ENCODE measurements at regions of chr11 and their contacts with region 1.

Region 1: DNA sequence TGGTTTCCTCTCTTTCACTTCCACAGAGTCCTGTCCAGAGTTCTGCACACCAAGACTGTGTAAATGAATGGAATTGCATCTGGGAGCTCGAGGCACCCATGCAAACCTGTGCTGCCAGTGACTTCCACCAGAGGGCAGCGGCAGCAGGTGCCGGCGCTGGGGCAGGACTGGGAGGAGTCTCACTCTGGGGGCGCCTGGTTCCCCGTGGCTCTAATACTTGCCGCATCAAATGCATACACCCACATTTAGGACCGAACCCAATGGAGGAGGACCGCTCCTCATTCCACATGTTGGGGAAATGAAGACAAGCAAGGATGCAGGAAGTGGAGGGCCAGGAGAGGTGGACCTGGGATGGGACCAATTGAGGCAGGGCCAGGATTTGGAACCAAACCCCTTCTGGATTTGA is 1.1 kb upstream of the CD6 start:
- DNase-seq: peak; percentile 66 to 88 (median 83)
- ATAC-seq: peak; percentile 74
- H3K4me3 ChIP-seq: peak overlapping the region in 1 of 2 experiments; percentile 80
- H3K4me3 Mint-ChIP-seq: peak overlapping the region; percentile 96
- H3K27ac ChIP-seq: peak overlapping the region; percentile 85 to 90
- H3K27ac Mint-ChIP-seq: peak overlapping the region; percentile 97
- H3K4me1 ChIP-seq: peaks cover 16% of the 10 kb centered on the region
- H3K4me1 Mint-ChIP-seq: peaks cover 30% of the 10 kb centered on the region
- H3K27me3 ChIP-seq: no peaks in the 10 kb centered on the region
- H3K27me3 Mint-ChIP-seq: no peaks in the 10 kb centered on the region
- CTCF ChIP-seq: peak; percentile 92

Region 2: GRCh38 chr11:60840470-60841430 is 129.6 kb before region 1 on chr11:
- CTCF ChIA-PET with region 1: no interaction called
- POLR2A ChIA-PET with region 1: no interaction called
- intact Hi-C with region 1: no loop called
- DNase-seq: no peak
- ATAC-seq: no peak
- H3K4me3 ChIP-seq: peak overlapping the region in 1 of 2 experiments; percentile 84
- H3K4me3 Mint-ChIP-seq: peak overlapping the region; percentile 93
- H3K27ac ChIP-seq: peak overlapping the region; percentile 70 to 83
- H3K27ac Mint-ChIP-seq: peak overlapping the region; percentile 97
- H3K4me1 ChIP-seq: peaks cover 35% of the 10 kb centered on the region
- H3K4me1 Mint-ChIP-seq: peaks cover 44% of the 10 kb centered on the region
- H3K27me3 ChIP-seq: no peaks in the 10 kb centered on the region
- H3K27me3 Mint-ChIP-seq: no peaks in the 10 kb centered on the region
- CTCF ChIP-seq: no peak

Region 3: DNA sequence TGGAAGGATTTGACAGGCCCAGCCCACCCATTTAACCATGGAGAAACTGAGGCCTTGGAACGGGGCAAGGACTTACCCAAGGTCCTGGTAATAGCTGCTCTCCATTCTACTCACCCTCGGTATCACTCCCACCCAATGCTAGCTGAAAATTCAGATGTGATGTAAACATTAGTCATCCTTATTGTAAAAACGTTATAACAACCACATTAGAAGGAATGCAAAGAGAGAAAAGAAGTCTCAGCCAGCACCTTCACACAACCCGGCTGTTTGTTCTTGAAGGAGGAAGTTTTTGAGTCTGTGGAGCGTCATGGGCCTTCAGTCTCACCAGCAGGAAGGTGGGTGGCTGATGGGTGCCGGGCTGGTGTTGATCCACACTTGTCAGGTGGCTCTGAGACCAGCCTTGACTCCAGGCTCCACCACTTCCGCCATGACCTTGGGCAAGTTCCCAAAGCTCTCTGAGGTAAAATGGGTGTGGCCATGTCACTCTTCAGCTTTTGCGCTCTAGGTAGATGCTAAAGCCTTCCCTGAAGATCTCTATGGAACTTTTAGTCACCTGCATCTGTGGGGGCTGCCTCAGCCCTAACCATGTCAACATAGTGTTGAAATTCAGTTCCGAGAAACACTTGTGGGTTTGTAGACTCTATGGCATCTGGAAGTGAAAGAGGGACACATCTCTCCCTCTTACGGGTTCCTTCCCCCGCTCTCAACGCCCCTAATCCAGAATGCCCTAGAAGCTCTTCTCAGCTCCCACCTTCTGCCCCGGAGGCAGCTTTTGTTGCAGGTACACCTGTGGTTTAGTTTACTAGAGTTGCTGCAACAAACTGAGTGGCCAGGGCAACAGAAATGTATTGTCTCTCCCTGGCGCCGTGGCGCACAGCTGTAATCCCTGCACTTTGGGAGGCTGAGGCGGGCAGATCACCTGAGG is 15.9 kb after region 1 on chr11:
- CTCF ChIA-PET with region 1: interaction called, 3 read pairs
- POLR2A ChIA-PET with region 1: no interaction called
- intact Hi-C with region 1: loop called (anchors 1 kb)
- DNase-seq: peak; percentile 81 to 99 (median 92)
- ATAC-seq: peak; percentile 86
- H3K4me3 ChIP-seq: peak overlapping the region; percentile 7 to 17
- H3K4me3 Mint-ChIP-seq: peak overlapping the region; percentile 68
- H3K27ac ChIP-seq: peak overlapping the region; percentile 72 to 86
- H3K27ac Mint-ChIP-seq: peak overlapping the region; percentile 96
- H3K4me1 ChIP-seq: peaks cover 83% of the 10 kb centered on the region
- H3K4me1 Mint-ChIP-seq: peaks cover 90% of the 10 kb centered on the region
- H3K27me3 ChIP-seq: no peaks in the 10 kb centered on the region
- H3K27me3 Mint-ChIP-seq: no peaks in the 10 kb centered on the region
- CTCF ChIP-seq: no peak

Region 4: DNA sequence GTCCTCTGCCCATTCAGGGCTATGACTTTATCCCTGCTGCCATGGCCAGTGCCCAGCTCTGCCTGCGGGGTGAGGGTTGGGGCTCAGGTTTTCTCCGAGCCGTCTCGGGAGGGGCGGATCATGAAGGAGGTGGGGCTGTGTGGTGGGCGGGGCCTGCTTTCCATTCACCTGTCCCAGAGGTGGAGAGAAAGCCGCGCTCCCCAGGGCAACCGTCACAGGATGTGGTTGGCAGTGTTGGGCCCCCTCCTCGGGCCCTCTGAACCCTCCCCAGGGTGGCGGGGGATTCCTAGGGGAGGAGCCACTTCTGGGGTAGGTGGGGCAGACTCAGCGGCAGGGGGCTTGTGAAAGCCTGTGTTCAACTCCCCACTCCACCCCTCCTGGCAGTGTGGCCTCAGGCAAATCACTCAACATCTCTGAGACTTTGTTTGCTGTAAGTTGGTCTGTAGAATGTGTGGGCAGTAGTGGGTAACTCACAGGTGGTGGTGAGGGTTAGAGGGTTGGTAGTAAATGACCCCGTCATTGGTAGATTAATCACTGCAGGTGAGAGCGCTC is 51.4 kb after region 1 on chr11:
- CTCF ChIA-PET with region 1: interaction called, 14 read pairs
- POLR2A ChIA-PET with region 1: interaction called, 5 read pairs
- intact Hi-C with region 1: loop called (anchors 1 to 2 kb)
- DNase-seq: peak; percentile 73 to 96 (median 89)
- ATAC-seq: peak; percentile 74
- H3K4me3 ChIP-seq: peak overlapping the region in 1 of 2 experiments; percentile 38
- H3K4me3 Mint-ChIP-seq: peak overlapping the region; percentile 61
- H3K27ac ChIP-seq: peak overlapping the region; percentile 41 to 84
- H3K27ac Mint-ChIP-seq: peak overlapping the region; percentile 95
- H3K4me1 ChIP-seq: peaks cover 60% of the 10 kb centered on the region
- H3K4me1 Mint-ChIP-seq: peaks cover 69% of the 10 kb centered on the region
- H3K27me3 ChIP-seq: no peaks in the 10 kb centered on the region
- H3K27me3 Mint-ChIP-seq: no peaks in the 10 kb centered on the region
- CTCF ChIP-seq: no peak

Region 5: DNA sequence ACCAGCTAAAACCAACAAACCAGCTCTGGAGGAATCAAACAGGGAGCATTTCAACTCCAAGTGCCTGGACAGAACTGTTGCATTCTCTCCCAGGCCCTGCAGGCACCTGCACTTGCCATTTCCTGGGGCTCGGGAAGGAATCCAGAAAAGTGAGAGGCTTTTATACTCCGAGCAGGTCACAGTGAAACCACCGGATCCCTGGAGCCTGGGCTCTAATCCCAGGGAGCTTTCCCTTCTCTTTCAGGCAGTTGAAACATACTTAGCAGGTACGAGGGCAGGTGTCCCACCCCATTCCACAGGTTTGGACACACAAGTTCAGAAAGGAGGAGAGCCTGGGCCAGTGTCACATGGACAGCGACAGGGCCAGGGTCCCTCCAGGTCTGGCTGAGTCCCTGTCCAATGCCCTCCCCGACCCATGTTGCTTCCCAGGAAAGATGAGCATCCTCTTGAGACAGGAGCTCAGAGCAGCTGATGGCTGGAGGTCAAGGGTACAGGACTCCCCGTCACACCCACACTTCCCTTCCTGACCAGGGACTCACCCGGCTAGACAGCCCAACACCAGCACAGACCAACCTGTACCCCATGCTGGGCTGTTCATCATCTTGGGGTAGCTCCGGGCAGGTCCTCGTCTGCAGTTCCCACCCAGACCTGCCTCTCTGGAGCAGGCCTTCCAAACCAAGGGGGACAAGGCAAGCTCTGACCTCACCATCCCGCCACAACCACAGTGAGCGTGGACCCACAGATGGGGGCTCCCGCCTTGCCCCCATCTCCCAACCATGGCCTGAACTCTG is 82.0 kb after region 1 on chr11:
- CTCF ChIA-PET with region 1: interaction called, 31 read pairs
- POLR2A ChIA-PET with region 1: interaction called, 8 read pairs
- intact Hi-C with region 1: loop called in 1 of 2 experiments (anchors 1 kb)
- DNase-seq: no peak
- ATAC-seq: no peak
- H3K4me3 ChIP-seq: no peak overlapping the region
- H3K4me3 Mint-ChIP-seq: no peak overlapping the region
- H3K27ac ChIP-seq: no peak overlapping the region
- H3K27ac Mint-ChIP-seq: no peak overlapping the region
- H3K4me1 ChIP-seq: peaks cover 27% of the 10 kb centered on the region
- H3K4me1 Mint-ChIP-seq: peaks cover 43% of the 10 kb centered on the region
- H3K27me3 ChIP-seq: no peaks in the 10 kb centered on the region
- H3K27me3 Mint-ChIP-seq: no peaks in the 10 kb centered on the region
- CTCF ChIP-seq: no peak

Region 6: DNA sequence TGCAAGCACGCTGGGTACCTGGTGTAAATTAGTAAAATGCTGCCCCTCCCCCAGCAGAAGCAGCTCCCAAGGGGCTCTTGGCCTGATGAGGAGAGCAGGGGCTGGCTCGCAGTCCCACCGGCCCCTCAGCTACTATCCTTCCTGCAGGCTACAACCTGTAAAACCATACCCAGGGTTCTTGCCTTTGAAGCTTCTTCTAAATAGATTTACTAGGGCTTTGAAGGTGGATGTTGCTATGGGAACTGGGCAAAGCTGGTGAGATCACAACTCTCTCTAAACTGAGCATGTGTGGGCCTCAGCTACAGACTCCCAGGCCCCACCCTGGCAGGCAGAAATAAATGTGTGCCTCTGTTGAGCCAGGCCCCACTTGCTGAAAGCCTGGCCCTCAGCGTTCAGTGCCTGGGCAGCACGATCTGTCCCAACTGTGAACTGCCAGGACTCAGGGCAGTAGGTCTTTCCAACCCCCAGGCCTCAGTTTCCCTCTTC is 150.4 kb after region 1 on chr11:
- CTCF ChIA-PET with region 1: interaction called, 5 read pairs
- POLR2A ChIA-PET with region 1: interaction called, 6 read pairs
- intact Hi-C with region 1: loop called in 1 of 2 experiments (anchors 2 kb)
- DNase-seq: peak in 8 of 9 experiments; percentile 30 to 92 (median 70)
- ATAC-seq: peak; percentile 86
- H3K4me3 ChIP-seq: peak overlapping the region in 1 of 2 experiments; percentile 24
- H3K4me3 Mint-ChIP-seq: peak overlapping the region; percentile 76
- H3K27ac ChIP-seq: peak overlapping the region; percentile 73 to 76
- H3K27ac Mint-ChIP-seq: peak overlapping the region; percentile 96
- H3K4me1 ChIP-seq: peaks cover 35% of the 10 kb centered on the region
- H3K4me1 Mint-ChIP-seq: peaks cover 64% of the 10 kb centered on the region
- H3K27me3 ChIP-seq: peaks cover 0 to 4% of the 10 kb centered on the region in 2 experiments
- H3K27me3 Mint-ChIP-seq: no peaks in the 10 kb centered on the region
- CTCF ChIP-seq: no peak

Region 7: GRCh38 chr11:61187505-61188130 is 217.2 kb after region 1 on chr11:
- CTCF ChIA-PET with region 1: interaction called, 3 read pairs
- POLR2A ChIA-PET with region 1: no interaction called
- intact Hi-C with region 1: loop called (anchors 1 kb)
- DNase-seq: peak; percentile 64 to 89 (median 83)
- ATAC-seq: peak; percentile 100
- H3K4me3 ChIP-seq: no peak overlapping the region
- H3K4me3 Mint-ChIP-seq: no peak overlapping the region
- H3K27ac ChIP-seq: no peak overlapping the region
- H3K27ac Mint-ChIP-seq: no peak overlapping the region
- H3K4me1 ChIP-seq: no peaks in the 10 kb centered on the region
- H3K4me1 Mint-ChIP-seq: peaks cover 3% of the 10 kb centered on the region
- H3K27me3 ChIP-seq: peaks cover 0 to 3% of the 10 kb centered on the region in 2 experiments
- H3K27me3 Mint-ChIP-seq: no peaks in the 10 kb centered on the region
- CTCF ChIP-seq: peak; percentile 98

Measured in CD8-positive, alpha-beta T cell (primary cell).